Activated CD4-positive, alpha-beta memory T cell treated with anti-CD3 and anti-CD28 coated beads for 36 hours (primary cell): ENCODE measurements at regions of chr1 and their contacts with region 1.

Region 1: DNA sequence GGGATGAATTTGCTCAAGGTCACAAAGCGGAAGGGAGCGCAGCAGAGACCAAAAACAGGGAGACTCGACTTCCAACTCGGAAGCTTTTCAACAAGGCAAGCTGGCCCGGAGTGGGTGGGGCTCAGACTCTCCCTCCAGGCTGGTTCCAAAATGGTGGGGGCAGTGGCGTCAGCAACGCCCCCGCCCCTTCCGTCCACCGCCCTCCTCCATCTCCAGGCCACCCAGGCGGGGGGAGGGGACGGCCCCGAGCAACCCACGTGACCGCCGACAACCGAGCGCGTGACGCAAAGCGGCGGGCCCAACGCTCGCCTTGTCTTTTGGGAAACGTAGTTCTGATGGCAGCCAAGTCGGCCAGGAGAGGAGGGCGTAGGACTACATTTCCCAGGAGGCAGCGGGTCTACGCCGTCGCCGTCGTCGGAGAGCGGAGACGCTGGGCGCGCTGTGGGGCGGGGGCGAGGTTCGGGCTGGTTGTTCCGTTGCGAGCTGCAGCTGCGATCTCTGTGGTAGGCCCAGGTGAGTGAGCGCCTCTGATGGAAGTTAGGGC is at the start of gene THRAP3:
- DNase-seq: peak; percentile 100
- H3K4me3 Mint-ChIP-seq: peak within 1 kb of the TSS; percentile 99
- H3K27ac Mint-ChIP-seq: peak within 1 kb of the TSS; percentile 100
- H3K4me1 Mint-ChIP-seq: peaks cover 30% of the 10 kb centered on the region
- H3K27me3 Mint-ChIP-seq: no peaks in the 10 kb centered on the region
- total RNA-seq, gene THRAP3: 135 to 138 TPM

Region 2: GRCh38 chr1:35675773-35676172 is 548.3 kb before region 1 on chr1:
- CTCF ChIA-PET with region 1: no interaction called
- POLR2A ChIA-PET with region 1: no interaction called
- intact Hi-C with region 1: no loop called
- DNase-seq: no peak
- H3K4me3 Mint-ChIP-seq: no peak overlapping the region
- H3K27ac Mint-ChIP-seq: no peak overlapping the region
- H3K4me1 Mint-ChIP-seq: no peaks in the 10 kb centered on the region
- H3K27me3 Mint-ChIP-seq: peaks cover 12% of the 10 kb centered on the region

Region 3: GRCh38 chr1:35688161-35688560 is 535.9 kb before region 1 on chr1:
- CTCF ChIA-PET with region 1: no interaction called
- POLR2A ChIA-PET with region 1: no interaction called
- intact Hi-C with region 1: no loop called
- DNase-seq: no peak
- H3K4me3 Mint-ChIP-seq: no peak overlapping the region
- H3K27ac Mint-ChIP-seq: no peak overlapping the region
- H3K4me1 Mint-ChIP-seq: no peaks in the 10 kb centered on the region
- H3K27me3 Mint-ChIP-seq: peaks cover 12% of the 10 kb centered on the region

Region 4: GRCh38 chr1:35930593-35931445 is 293.2 kb before region 1 on chr1 and contains the start of gene AGO3:
- CTCF ChIA-PET with region 1: no interaction called
- POLR2A ChIA-PET with region 1: no interaction called
- intact Hi-C with region 1: loop called (anchors 5 kb)
- DNase-seq: peak; percentile 94
- H3K4me3 Mint-ChIP-seq: peak within 1 kb of the TSS; percentile 94
- H3K27ac Mint-ChIP-seq: peak within 1 kb of the TSS; percentile 93
- H3K4me1 Mint-ChIP-seq: peaks cover 33% of the 10 kb centered on the region
- H3K27me3 Mint-ChIP-seq: no peaks in the 10 kb centered on the region
- total RNA-seq, gene AGO3: 23.1 to 25.3 TPM

Region 5: DNA sequence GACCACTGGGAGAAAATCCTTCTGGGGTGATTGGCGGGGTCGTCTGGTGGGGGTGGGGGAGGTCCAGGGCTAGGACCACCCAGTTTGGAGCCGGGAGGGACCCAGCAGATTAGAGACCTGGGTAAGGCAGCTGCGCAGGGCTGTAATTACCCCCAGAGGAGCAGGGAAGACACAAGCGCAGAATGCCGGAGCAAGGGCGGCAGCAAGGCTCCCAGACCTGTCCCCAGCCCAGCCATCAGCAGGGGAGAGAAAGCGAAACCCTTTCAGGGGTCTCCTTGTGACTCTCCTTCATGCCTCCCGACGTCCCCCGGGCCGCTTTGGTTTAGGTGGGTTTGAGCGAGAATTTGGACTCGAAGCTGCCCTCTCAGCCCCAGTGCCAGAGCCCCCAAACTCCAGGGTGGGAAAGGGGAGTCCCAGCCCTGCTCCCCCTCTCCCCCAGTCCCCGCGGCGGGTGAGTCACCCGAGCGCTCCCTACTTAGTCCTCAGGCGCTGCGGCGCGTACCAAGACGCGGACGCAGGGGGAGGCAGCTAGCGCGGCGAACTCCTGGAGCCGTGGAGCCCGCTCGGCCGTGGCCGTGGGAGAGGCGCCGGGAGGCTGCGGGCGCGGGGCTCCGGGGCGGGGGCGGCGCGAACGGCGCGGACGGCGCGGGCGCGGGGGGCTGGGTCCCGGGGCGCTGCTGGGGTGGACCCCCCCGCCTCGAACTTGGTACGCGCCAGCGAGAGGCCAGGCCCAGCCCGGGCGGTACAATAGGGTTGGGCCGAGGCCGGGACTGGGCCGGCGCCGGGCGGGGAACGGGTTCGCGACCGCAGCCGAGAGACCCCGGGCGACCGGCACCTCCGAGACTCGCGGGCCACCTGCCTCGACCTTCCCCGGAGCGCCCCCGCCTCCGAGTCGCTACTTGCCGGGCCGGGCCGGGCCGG is 68.4 kb before region 1 on chr1 and contains the start of gene MAP7D1:
- CTCF ChIA-PET with region 1: interaction called, 37 read pairs
- POLR2A ChIA-PET with region 1: interaction called, 35 read pairs
- intact Hi-C with region 1: loop called (anchors 1 kb)
- DNase-seq: peak; percentile 88
- H3K4me3 Mint-ChIP-seq: peak within 1 kb of the TSS; percentile 86
- H3K27ac Mint-ChIP-seq: peak within 1 kb of the TSS; percentile 92
- H3K4me1 Mint-ChIP-seq: peaks cover 68% of the 10 kb centered on the region
- H3K27me3 Mint-ChIP-seq: no peaks in the 10 kb centered on the region
- total RNA-seq, gene MAP7D1: 138 to 143 TPM

Region 6: DNA sequence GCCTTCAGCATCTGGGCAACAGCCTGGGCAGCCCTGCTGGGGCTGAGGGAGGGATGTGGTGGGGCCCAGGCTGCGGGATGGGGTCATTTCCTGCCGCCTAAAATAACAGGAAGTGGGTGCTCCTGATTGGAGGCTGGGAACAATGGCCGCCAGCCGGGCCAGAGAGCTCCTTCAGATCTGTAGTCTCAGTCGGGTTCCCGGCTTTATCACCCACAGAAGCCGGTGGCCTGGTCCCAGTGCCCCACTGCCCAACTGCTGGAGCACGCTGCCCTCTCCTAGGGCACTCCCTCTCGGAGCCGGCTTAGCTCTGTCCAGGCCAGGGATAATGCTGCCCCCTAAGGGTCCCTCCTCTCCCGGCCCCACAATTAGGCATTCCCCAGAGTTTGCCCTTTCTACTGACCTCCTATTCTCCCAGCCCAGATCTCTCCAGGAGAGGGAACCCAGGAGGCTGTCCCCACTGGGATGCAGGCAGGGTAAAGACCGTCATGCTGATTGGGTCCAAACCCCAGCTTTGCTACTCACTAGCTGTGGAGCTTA is 63.0 kb before region 1 on chr1:
- CTCF ChIA-PET with region 1: interaction called, 19 read pairs
- POLR2A ChIA-PET with region 1: interaction called, 35 read pairs
- intact Hi-C with region 1: loop called (anchors 1 kb)
- DNase-seq: peak; percentile 88
- H3K4me3 Mint-ChIP-seq: peak overlapping the region; percentile 72
- H3K27ac Mint-ChIP-seq: peak overlapping the region; percentile 95
- H3K4me1 Mint-ChIP-seq: peaks cover 59% of the 10 kb centered on the region
- H3K27me3 Mint-ChIP-seq: no peaks in the 10 kb centered on the region

Region 7: DNA sequence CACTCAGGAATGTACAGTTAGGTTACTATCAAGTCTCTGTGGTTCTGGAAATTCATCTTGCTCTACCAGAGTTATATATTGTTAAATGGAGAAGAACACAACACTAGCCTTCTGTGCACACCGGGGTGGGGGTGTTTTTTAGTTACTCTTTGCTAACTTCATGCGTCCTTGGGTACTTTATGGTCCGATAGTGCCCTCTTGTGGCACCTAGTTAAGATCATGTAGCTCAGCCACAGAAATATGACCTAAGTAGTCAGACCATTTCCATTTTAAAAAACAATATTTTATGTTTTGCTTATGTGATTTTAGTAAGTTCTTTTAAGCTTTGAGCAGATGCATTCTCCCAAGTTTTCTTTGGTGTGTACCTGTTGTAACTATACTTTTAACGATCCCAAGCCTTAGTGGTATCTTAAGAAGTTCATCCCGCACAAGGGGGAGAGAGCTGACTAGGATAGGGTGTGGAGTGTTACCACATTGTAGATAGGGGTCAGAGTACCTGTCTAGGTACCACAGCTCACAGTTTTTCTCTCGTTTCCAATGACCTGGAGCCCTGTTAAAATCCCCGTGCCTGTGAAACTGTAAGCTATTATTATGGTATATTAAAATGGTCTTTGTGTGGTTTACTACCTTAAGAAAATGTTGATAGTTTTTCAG is 61.5 kb after region 1 on chr1:
- CTCF ChIA-PET with region 1: interaction called, 8 read pairs
- POLR2A ChIA-PET with region 1: interaction called, 9 read pairs
- intact Hi-C with region 1: loop called (anchors 2 kb)
- DNase-seq: peak; percentile 68
- H3K4me3 Mint-ChIP-seq: no peak overlapping the region
- H3K27ac Mint-ChIP-seq: peak overlapping the region; percentile 80
- H3K4me1 Mint-ChIP-seq: peaks cover 36% of the 10 kb centered on the region
- H3K27me3 Mint-ChIP-seq: no peaks in the 10 kb centered on the region

Region 8: GRCh38 chr1:36300526-36300925 is 76.5 kb after region 1 on chr1:
- CTCF ChIA-PET with region 1: interaction called, 7 read pairs
- POLR2A ChIA-PET with region 1: interaction called, 5 read pairs
- intact Hi-C with region 1: loop called (anchors 2 kb)
- DNase-seq: peak; percentile 44
- H3K4me3 Mint-ChIP-seq: peak overlapping the region; percentile 3
- H3K27ac Mint-ChIP-seq: peak overlapping the region; percentile 95
- H3K4me1 Mint-ChIP-seq: peaks cover 61% of the 10 kb centered on the region
- H3K27me3 Mint-ChIP-seq: no peaks in the 10 kb centered on the region

Region 9: DNA sequence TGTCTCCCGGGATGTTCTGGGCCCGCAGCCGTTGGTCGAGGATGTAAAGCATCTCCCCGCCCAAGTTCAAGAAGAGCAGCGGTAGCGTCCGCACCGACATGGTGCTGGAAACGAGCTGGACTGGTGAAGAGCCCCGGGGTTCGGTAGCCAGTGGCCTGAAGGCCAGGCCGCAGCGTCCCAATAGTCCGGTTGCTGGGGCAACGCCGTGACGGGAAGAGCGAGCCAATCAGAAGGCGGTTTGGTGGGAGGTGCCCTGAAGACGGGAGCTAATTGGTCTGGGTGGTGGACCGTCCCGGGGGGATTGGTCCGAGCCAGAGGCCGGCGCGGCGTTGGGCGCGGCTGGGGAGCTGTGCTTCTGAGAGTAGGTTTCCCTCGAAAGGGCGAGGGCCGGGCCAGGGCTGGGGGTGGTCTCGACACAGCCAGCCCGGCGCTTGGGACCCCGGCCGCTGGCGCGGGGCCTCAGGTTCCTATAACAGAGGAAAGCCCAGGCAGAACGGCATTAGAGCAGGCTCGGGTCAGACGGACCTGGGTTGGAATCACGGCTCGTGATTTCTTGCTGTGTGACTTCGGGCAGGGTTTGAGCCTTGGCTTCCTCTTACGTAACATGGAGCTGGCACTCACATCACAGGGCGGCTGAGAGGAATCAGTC is 226.3 kb after region 1 on chr1 and contains the start of gene OSCP1:
- CTCF ChIA-PET with region 1: interaction called, 3 read pairs
- POLR2A ChIA-PET with region 1: no interaction called
- intact Hi-C with region 1: loop called (anchors 5 kb)
- DNase-seq: peak; percentile 92
- H3K4me3 Mint-ChIP-seq: peak within 1 kb of the TSS; percentile 88
- H3K27ac Mint-ChIP-seq: peak within 1 kb of the TSS; percentile 79
- H3K4me1 Mint-ChIP-seq: peaks cover 14% of the 10 kb centered on the region
- H3K27me3 Mint-ChIP-seq: no peaks in the 10 kb centered on the region
- total RNA-seq, gene OSCP1: 1.8 to 2.7 TPM